SK-N-SH (cell line): ENCODE measurements at regions of chr5 and their contacts with region 1.

Region 1: DNA sequence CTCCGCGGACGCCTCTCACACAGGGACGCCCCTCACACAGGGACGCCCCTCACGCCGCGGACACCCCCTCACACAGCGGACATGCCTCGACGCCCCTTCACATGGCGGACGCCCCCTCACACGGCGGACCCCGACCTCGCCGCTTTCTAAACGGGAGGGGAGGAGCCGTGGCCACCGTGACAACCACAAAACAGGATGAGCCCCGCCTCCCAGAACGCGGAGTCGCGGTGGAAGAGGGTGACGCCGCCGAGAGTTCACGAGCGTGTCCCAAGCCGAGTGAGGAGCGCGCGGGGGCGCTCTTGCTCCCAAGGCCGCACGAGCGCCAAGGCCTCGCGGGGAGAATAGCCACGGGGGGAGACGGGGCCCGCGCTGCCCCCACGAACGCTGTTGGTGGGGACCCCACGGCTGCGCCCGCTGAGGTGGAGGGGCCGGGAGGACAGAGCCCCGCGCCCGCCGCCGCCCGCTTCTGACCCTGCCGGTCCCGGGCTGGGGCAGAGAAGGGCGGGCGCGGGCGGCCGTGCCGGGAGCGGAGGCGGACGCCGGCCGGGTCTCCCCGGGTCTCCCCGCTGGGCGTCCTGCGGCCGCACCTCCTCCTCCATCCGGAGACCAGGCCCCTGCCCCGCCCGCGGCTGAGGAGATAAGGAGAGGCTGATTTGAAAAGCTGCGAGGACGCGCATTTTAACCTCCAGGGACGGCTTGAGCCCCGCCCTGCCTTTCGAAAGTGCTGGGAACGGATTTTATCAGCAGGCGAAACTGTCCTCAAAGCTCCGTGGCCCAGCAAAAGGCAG is 3.9 kb upstream of the NKD2 start:
- DNase-seq: peak; percentile 78
- H3K4me3 ChIP-seq: peak overlapping the region; percentile 31 to 37; a peak in 2 of 4 replicates
- H3K27ac ChIP-seq: no peak overlapping the region
- H3K4me1 ChIP-seq: peaks cover 0 to 2% of the 10 kb centered on the region in 2 experiments; a peak in 1 of 4 replicates
- H3K27me3 ChIP-seq: peaks cover 54% of the 10 kb centered on the region
- CTCF ChIP-seq: no peak; the same call in 1 of the 2 replicates
- EP300 ChIP-seq: no peak
- RAD21 ChIP-seq: peak; percentile 19; the same call in 1 of the 2 replicates

Region 2: DNA sequence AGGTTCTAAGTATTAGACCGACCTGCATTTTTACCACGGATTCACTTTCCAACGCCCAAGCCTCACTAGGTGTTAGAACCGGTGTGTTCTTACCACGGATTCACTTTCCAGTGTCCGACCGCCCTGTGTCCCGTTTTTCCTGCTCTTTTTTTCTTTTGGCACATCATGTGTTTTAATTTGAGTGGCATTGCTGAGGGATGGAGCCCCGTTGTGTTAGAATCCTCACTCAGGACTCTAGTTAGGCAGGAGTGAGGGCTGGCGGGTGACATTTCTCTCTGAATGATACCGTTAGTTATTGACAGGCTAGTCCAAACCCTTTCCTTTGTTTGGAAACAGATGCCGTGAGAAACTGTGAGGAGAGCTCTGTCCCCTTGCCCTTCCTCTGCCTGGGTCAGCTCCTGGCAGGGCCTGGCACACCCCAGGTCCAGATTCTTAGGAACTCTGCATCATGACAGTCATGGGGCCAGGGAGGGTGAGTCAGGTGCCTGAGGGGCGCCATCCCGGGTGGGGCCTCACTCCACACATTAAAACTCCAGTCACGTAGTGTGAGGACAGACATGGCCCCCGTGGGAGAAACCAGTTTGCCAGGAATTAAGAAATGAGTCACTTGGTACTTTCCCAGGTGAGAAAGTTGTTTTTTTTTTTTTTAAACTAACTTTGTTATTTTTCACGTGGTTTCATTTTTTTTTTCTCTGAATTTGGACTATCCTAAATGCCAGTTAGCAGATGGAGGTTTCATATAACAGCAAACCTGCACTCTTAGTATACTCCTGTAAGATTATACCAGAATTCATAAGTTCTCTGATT is 545.9 kb before region 1 on chr5:
- CTCF ChIA-PET with region 1: no interaction called
- POLR2A ChIA-PET with region 1: no interaction called
- DNase-seq: no peak
- H3K4me3 ChIP-seq: no peak overlapping the region
- H3K27ac ChIP-seq: no peak overlapping the region
- H3K4me1 ChIP-seq: no peaks in the 10 kb centered on the region
- H3K27me3 ChIP-seq: no peaks in the 10 kb centered on the region
- CTCF ChIP-seq: no peak
- EP300 ChIP-seq: no peak
- RAD21 ChIP-seq: no peak

Region 3: GRCh38 chr5:976849-977751 is 27.6 kb before region 1 on chr5:
- CTCF ChIA-PET with region 1: interaction called, 13 read pairs
- POLR2A ChIA-PET with region 1: no interaction called
- DNase-seq: no peak
- H3K4me3 ChIP-seq: no peak overlapping the region
- H3K27ac ChIP-seq: no peak overlapping the region
- H3K4me1 ChIP-seq: peaks cover 0 to 5% of the 10 kb centered on the region in 2 experiments; a peak in 1 of 4 replicates
- H3K27me3 ChIP-seq: peaks cover 6% of the 10 kb centered on the region; the same call in 1 of the 2 replicates
- CTCF ChIP-seq: no peak
- EP300 ChIP-seq: no peak
- RAD21 ChIP-seq: no peak

Region 4: DNA sequence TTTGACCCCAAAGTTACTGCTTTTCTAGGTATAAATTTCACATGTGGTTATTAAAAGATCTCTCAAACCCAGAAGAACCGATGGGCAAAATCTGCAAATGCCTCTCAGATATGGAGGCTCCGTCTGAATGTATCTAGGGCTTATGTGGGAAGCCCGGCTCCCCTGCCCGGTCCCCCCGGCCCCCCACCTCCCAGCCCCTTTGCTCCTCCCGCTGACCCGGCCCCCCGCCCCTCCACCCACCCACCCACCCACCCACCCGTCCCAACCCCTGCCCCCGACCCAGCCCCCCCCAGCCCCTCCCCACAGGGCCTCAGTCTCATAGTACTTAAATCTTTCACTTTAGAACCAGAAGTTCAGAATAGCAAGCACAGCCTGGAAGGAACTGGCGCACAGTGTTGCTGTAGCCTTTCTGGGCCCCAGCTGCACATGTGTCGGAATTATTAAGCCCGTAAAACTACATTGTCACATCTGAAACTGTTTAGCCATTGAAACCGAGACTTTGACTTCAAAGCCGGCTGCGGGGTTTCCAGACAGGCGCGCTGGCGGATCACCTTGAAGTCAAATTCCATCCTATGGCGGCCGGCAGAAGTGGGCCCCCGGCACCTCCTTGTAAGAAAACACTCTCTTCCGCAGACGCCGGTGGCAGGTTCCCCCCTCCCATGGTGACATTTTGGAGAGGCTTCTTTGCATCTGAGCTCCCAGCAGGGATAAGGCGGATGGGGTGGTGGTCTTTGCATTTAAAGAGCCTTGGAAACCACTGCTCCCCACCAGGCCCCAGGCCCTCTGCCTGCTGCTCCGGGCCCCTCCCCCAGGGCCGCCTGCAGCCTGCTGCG is 16.7 kb after region 1 on chr5:
- CTCF ChIA-PET with region 1: interaction called, 41 read pairs
- POLR2A ChIA-PET with region 1: interaction called, 3 read pairs
- DNase-seq: peak; percentile 38
- H3K4me3 ChIP-seq: no peak overlapping the region
- H3K27ac ChIP-seq: no peak overlapping the region
- H3K4me1 ChIP-seq: no peaks in the 10 kb centered on the region; a peak in 1 of 4 replicates
- H3K27me3 ChIP-seq: no peaks in the 10 kb centered on the region
- CTCF ChIP-seq: no peak
- EP300 ChIP-seq: no peak
- RAD21 ChIP-seq: no peak

Region 5: DNA sequence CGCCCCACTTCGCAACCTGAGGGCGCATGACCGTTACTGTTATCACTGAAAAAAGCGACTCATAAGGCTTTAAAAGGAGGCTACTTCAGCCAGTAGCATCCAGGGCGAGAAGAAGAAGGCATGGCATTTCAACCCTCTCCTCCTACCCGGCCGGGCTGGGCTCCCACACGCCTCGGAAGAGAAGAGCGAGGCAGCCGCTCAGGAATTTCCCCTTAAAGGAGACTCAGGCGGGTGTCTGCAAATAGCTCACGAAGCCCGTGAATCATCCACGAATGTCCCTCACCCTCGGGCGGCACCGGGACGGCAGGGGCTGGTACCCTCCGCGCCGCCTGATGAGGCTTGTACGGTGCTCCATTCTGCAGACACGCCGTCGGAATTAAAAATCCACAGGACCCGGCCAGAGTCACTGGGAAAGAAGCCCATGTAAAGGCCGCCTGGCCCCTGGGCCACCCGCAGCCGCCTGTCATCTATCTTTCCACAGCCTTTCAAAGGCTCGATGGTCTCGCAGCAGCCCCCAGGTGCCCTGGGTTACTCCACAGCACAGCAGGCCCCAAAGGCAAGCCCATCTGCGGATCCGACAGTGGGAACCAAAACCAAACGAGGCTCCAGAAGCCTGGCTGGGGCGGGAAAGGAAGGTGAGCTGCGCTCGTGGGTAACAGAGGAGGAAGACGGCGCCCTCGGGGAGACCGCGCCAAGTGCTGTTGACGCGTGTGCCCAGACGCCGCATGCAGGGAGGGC is 95.4 kb after region 1 on chr5:
- CTCF ChIA-PET with region 1: no interaction called
- POLR2A ChIA-PET with region 1: no interaction called
- DNase-seq: no peak
- H3K4me3 ChIP-seq: no peak overlapping the region
- H3K27ac ChIP-seq: no peak overlapping the region
- H3K4me1 ChIP-seq: peaks cover 0 to 4% of the 10 kb centered on the region in 2 experiments; a peak in 1 of 4 replicates
- H3K27me3 ChIP-seq: no peaks in the 10 kb centered on the region
- CTCF ChIP-seq: no peak
- EP300 ChIP-seq: no peak
- RAD21 ChIP-seq: no peak

Region 6: GRCh38 chr5:1125030-1125357 is 120.3 kb after region 1 on chr5:
- CTCF ChIA-PET with region 1: interaction called, 14 read pairs
- POLR2A ChIA-PET with region 1: no interaction called
- DNase-seq: peak; percentile 93
- H3K4me3 ChIP-seq: no peak overlapping the region
- H3K27ac ChIP-seq: peak overlapping the region in 1 of 2 experiments; percentile 54; a peak in 2 of 4 replicates
- H3K4me1 ChIP-seq: peaks cover 0 to 30% of the 10 kb centered on the region in 2 experiments; a peak in 1 of 4 replicates
- H3K27me3 ChIP-seq: peaks cover 4% of the 10 kb centered on the region; the same call in 1 of the 2 replicates
- CTCF ChIP-seq: no peak
- EP300 ChIP-seq: peak in 1 of 2 experiments; percentile 86; a peak in 2 of 4 replicates
- RAD21 ChIP-seq: peak; percentile 18; the same call in 1 of the 2 replicates